Ascending aorta (tissue), 2 donors: ENCODE measurements at regions of chr4 and their contacts with region 1.

Region 1: GRCh38 chr4:8403173-8403753 is 37.3 kb downstream of the ACOX3 start:
- DNase-seq: peak in 1 of 2 donors; percentile 92
- H3K4me3 ChIP-seq: no peak overlapping the region
- H3K27ac ChIP-seq: peak overlapping the region; percentile 86 to 89
- H3K4me1 ChIP-seq: peaks cover 15 to 19% of the 10 kb centered on the region in 2 donors
- H3K27me3 ChIP-seq: no peaks in the 10 kb centered on the region
- CTCF ChIP-seq: peak; percentile 83 to 88 (median 88)

Region 2: GRCh38 chr4:7802093-7802726 is 601.1 kb before region 1 on chr4:
- intact Hi-C with region 1: no loop called
- DNase-seq: peak in 1 of 2 donors; percentile 91
- H3K4me3 ChIP-seq: no peak overlapping the region
- H3K27ac ChIP-seq: no peak overlapping the region
- H3K4me1 ChIP-seq: peaks cover 21 to 30% of the 10 kb centered on the region in 2 donors
- H3K27me3 ChIP-seq: no peaks in the 10 kb centered on the region
- CTCF ChIP-seq: peak; percentile 90 to 95 (median 93)

Region 3: DNA sequence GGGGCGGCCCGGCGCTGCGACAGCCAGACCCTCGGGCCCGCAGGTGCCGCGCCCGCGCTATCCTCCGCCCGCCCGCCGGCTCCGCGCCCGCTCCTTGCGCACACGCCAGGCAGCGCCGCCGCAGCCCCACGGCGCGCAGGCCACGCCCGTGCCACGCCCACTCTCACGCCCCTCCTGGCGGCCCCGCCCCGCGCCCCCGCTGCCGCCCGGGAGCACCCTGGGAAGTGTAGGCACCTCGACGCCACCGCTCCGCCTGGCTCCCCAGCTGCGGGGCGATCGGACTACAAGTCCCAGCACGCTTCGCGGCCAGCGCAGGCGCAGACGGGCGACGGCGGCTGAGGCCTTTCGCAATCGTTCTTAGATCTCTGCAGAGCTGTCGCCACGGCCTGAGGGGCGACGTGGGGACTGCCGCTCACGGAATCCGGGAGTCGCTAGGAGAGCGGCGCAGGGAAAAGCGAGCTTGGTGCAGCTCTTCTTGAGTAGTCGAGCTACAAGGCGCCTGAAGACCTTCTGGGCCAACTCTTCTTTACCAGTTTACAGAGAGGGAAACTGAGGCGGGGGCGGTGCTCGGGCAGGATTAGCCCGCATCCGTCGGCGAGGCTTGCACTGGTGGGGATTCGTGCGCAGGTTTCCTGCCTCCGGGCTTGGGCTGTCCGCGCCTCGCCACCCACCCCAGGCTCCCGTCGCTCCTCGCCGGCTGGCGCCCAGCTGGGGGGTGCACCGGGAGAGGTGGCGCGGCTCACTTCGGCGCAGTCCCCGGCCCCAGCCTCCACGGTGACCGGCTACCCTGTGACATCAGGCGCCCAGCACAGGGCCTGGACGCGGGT is 244.3 kb before region 1 on chr4 and contains the start of gene ABLIM2:
- intact Hi-C with region 1: loop called (anchors 1 kb)
- DNase-seq: peak; percentile 92 to 99
- H3K4me3 ChIP-seq: peak within 1 kb of the TSS; percentile 86 to 94
- H3K27ac ChIP-seq: peak within 1 kb of the TSS; percentile 36 to 50
- H3K4me1 ChIP-seq: peaks cover 13 to 25% of the 10 kb centered on the region in 2 donors
- H3K27me3 ChIP-seq: no peaks in the 10 kb centered on the region
- CTCF ChIP-seq: no peak
- total RNA-seq, gene ABLIM2: 30.8 TPM

Region 4: DNA sequence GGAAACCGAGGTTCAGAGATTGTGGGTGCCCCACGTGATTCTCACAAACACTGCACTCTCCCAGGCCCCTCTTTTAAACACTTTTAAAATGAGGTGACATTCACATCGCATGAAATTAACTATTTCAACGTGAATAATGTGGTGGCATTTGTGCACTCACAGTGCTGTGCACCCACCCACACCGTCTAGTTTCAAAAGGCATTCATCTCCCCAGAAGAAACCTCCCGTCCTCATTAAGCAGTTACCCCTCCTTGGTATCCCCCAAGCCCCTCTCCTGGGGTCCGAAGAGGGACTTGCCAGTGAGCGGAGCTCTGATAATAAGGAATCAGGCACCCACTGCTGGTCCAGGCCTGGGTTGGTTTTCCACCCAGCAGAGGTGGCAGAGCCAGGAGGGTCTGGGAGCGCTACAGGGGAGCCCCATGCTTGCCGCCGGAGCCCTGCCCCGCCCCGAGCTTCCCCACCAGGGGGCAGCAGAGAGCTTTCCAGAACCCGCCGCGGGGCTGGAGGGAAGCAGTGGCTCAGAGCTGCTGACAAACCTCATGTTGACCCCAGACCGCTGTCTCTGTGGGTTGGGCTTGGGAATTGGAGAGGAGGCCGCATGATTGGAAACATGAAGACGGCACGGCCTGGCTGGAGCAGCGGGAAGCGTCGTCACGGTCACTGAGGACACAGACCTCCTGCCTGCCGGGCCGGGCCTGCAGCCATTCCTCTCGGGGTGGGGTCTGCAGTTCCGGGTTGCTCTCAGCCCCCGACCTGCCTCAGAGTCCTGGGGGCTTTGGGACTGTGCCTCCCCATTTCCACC is 161.2 kb before region 1 on chr4:
- intact Hi-C with region 1: loop called (anchors 1 kb)
- DNase-seq: peak; percentile 49 to 91
- H3K4me3 ChIP-seq: no peak overlapping the region
- H3K27ac ChIP-seq: peak overlapping the region in 1 of 2 donors; percentile 7
- H3K4me1 ChIP-seq: peaks cover 0 to 5% of the 10 kb centered on the region in 2 donors
- H3K27me3 ChIP-seq: no peaks in the 10 kb centered on the region
- CTCF ChIP-seq: peak; percentile 93 to 98 (median 96)

Region 5: GRCh38 chr4:8274765-8275547 is 128.3 kb before region 1 on chr4:
- intact Hi-C with region 1: loop called (anchors 1 kb)
- DNase-seq: peak; percentile 52 to 92
- H3K4me3 ChIP-seq: no peak overlapping the region
- H3K27ac ChIP-seq: peak overlapping the region; percentile 21 to 35
- H3K4me1 ChIP-seq: peaks cover 21 to 39% of the 10 kb centered on the region in 2 donors
- H3K27me3 ChIP-seq: no peaks in the 10 kb centered on the region
- CTCF ChIP-seq: peak; percentile 42 to 75 (median 53)

Region 6: DNA sequence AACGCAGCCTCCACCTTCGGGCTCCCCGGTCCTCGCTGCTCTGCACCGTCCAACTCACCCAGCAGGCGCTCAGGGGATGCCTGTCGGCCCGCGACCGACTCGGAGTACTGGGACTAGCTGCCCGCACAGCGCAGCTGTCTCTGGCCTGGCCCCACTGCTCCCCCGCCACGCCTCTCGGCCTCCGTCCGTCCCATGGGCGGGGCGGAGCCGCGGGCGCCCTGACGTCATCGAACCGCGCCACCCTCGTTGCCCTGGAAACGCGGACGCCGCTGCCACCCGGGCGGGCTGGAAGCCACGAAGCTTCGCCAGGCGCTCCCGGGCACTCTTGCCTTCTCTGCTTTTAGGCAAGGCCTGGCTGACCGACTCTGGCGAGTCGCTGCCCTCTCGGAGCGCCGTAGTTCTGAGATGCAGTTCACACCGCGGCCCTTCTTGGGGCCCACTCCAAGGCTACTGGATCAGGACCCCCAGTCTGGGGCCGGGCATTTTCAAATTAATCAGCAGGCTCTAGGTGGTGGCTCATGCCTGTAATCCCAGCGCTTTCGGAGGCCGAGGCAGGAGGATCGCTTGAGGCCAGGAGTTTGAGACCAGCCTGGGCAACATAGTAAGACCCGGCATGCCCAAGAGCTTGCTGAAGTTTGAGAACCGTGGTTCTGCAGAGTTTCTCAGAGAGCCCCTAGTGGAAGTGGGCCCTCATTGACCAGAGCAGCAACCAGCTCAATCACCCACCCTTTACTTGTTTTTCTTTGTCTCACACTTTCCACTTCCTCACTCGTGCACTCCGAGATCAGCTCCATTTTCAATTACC is 25.2 kb after region 1 on chr4:
- intact Hi-C with region 1: loop called (anchors 2 kb)
- DNase-seq: peak; percentile 47 to 95
- H3K4me3 ChIP-seq: peak overlapping the region; percentile 88 to 89
- H3K27ac ChIP-seq: peak overlapping the region; percentile 86 to 93
- H3K4me1 ChIP-seq: peaks cover 8 to 22% of the 10 kb centered on the region in 2 donors
- H3K27me3 ChIP-seq: no peaks in the 10 kb centered on the region
- CTCF ChIP-seq: peak in 1 of 3 experiments; percentile 13

Region 7: DNA sequence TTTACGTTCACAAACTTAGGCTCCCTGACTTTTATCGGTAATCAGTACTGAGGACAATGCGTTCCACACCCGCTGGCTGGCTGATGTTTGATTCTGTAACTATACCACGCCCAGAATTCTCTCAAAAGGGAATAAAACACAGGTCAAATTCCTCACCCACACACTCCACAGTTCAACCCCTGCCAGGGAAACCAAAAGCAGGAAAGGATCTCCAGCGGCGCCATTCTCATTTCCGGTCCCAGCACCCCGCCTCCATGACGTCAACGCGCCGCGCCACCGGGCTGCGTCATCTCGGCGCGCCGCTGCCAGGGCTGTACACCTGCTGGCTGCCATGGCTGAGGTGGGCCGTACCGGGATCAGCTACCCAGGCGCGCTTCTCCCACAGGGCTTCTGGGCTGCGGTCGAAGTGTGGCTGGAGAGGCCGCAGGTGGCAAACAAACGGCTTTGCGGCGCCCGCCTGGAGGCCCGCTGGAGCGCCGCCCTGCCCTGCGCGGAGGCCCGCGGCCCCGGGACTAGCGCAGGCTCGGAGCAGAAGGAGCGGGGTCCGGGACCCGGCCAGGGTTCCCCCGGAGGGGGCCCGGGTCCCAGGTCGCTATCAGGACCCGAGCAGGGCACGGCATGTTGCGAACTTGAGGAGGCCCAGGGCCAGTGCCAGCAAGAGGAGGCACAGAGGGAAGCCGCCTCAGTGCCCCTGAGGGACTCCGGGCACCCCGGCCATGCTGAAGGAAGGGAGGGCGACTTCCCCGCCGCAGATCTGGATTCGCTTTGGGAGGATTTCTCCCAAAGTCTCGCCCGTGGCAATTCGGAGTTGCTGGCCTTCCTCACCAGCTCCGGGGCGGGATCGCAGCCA is 37.5 kb after region 1 on chr4 and contains the starts of genes ACOX3 and TRMT44:
- intact Hi-C with region 1: loop called (anchors 2 kb)
- DNase-seq: peak; percentile 79 to 97
- H3K4me3 ChIP-seq: peak within 1 kb of the TSS; percentile 89 to 93
- H3K27ac ChIP-seq: peak within 1 kb of the TSS; percentile 95 to 97
- H3K4me1 ChIP-seq: peaks cover 7 to 31% of the 10 kb centered on the region in 2 donors
- H3K27me3 ChIP-seq: no peaks in the 10 kb centered on the region
- CTCF ChIP-seq: no peak
- total RNA-seq, gene ACOX3: 74.5 TPM
- total RNA-seq, gene TRMT44: 39.8 TPM